ENCODE measurements at regions of chr2 and their contacts with region 1.

Region 1: DNA sequence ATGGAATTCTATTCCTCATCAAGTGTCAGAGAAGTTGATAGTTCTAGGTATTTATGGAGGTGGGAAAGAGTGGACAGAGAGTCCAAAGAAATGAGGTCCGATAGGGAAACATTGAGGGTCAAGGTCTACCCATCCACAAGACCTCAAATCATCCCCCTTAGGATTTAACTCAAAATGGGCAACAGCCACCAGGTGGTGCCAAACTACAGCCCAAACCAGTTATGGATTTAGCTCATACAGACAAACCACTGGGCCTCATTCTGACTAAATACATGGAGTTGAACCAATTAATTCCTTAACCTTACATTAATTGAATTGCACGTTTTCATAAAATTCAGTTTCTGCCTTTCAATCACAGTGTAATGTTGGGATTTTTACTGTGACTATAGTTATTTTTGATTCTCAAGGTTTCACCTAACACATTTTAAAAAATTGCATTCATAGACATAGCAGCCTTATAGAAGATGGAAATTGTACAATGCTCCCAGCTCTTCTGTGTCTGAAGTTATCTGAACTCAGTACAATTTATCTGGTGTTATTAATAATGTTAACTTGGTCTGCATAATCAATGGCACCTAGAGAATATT is 98.2 kb upstream of the HNMT start:
- DNase-seq: peak; percentile 11 to 55 (median 32)
- ATAC-seq: no peak
- H3K4me3 ChIP-seq: no peak overlapping the region
- H3K4me3 Mint-ChIP-seq: no peak overlapping the region
- H3K27ac ChIP-seq: no peak overlapping the region
- H3K27ac Mint-ChIP-seq: no peak overlapping the region
- H3K4me1 ChIP-seq: no peaks in the 10 kb centered on the region
- H3K4me1 Mint-ChIP-seq: no peaks in the 10 kb centered on the region
- H3K27me3 ChIP-seq: no peaks in the 10 kb centered on the region
- H3K27me3 Mint-ChIP-seq: peaks cover 10% of the 10 kb centered on the region
- CTCF ChIP-seq: peak; percentile 54

Region 2: GRCh38 chr2:137975280-137976265 is 109.5 kb after region 1 on chr2:
- CTCF ChIA-PET with region 1: no interaction called
- POLR2A ChIA-PET with region 1: no interaction called
- intact Hi-C with region 1: no loop called
- DNase-seq: no peak
- ATAC-seq: no peak
- H3K4me3 ChIP-seq: no peak overlapping the region
- H3K4me3 Mint-ChIP-seq: no peak overlapping the region
- H3K27ac ChIP-seq: no peak overlapping the region
- H3K27ac Mint-ChIP-seq: no peak overlapping the region
- H3K4me1 ChIP-seq: no peaks in the 10 kb centered on the region
- H3K4me1 Mint-ChIP-seq: no peaks in the 10 kb centered on the region
- H3K27me3 ChIP-seq: no peaks in the 10 kb centered on the region
- H3K27me3 Mint-ChIP-seq: no peaks in the 10 kb centered on the region
- CTCF ChIP-seq: no peak

Region 3: DNA sequence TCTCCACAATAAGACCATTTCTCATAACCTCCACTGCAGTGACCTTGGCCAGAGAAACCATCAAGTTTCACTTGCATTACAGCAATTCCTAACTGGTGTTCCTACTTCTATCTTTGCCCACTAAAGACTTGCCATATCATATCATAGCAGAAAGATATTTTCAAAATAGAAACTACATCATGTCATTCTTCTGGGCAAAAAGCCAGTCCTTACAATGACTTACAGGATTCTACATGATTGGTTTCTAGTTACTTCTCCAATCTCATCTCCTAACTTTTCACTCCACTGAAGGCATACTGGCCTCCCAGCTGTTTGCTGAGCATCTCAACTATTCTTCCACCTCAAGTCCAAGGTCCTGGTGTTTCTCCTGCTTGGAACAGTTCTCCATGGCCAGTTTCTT is 249.6 kb after region 1 on chr2:
- CTCF ChIA-PET with region 1: no interaction called
- POLR2A ChIA-PET with region 1: no interaction called
- intact Hi-C with region 1: no loop called
- DNase-seq: no peak
- ATAC-seq: no peak
- H3K4me3 ChIP-seq: no peak overlapping the region
- H3K4me3 Mint-ChIP-seq: no peak overlapping the region
- H3K27ac ChIP-seq: no peak overlapping the region
- H3K27ac Mint-ChIP-seq: no peak overlapping the region
- H3K4me1 ChIP-seq: no peaks in the 10 kb centered on the region
- H3K4me1 Mint-ChIP-seq: no peaks in the 10 kb centered on the region
- H3K27me3 ChIP-seq: no peaks in the 10 kb centered on the region
- H3K27me3 Mint-ChIP-seq: no peaks in the 10 kb centered on the region
- CTCF ChIP-seq: no peak

Region 4: DNA sequence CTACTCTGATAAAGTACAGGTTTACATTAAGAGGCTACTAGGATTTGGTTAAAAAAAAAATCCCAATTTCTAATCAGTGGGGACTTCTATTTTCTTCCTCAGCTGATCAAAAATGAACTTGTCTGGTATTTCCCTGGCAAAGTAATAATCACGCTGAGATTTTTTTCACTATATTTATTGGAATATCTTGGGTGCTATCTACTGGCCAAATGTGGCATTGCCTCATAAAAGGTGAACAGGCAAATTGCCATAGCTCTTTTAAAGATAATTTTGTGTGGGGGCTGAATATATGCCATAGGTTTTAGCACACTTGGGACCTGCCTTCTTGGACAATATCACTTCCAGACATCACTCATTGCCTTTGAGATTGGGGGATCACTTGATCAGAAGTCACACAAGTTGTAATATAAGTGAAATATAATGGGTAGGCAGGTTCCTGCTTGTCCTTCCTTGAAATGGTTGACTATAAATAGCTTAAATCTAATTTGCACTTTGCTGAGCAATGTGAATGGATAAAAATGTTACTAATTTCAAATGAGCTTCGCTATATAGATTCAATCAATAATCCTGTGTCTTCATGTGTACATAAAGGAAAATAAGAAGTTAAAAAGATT is 921.1 kb after region 1 on chr2:
- CTCF ChIA-PET with region 1: no interaction called
- POLR2A ChIA-PET with region 1: no interaction called
- intact Hi-C with region 1: loop called (anchors 1 to 2 kb)
- DNase-seq: peak in 3 of 14 experiments; percentile 13 to 18 (median 15)
- ATAC-seq: no peak
- H3K4me3 ChIP-seq: no peak overlapping the region
- H3K4me3 Mint-ChIP-seq: no peak overlapping the region
- H3K27ac ChIP-seq: no peak overlapping the region
- H3K27ac Mint-ChIP-seq: no peak overlapping the region
- H3K4me1 ChIP-seq: no peaks in the 10 kb centered on the region
- H3K4me1 Mint-ChIP-seq: no peaks in the 10 kb centered on the region
- H3K27me3 ChIP-seq: peaks cover under 1 to 8% of the 10 kb centered on the region in 2 experiments
- H3K27me3 Mint-ChIP-seq: peaks cover 14% of the 10 kb centered on the region
- CTCF ChIP-seq: peak; percentile 42

Measured in CD4-positive, alpha-beta T cell (primary cell).